ENCODE measurements at regions of chr9 and their contacts with region 1.

Region 1: GRCh38 chr9:18208154-18209059 is 265.5 kb upstream of the ADAMTSL1 start:
- DNase-seq: peak; percentile 8
- ATAC-seq: no peak
- H3K4me3 Mint-ChIP-seq: no peak overlapping the region
- H3K27ac Mint-ChIP-seq: no peak overlapping the region
- H3K4me1 Mint-ChIP-seq: no peaks in the 10 kb centered on the region
- H3K27me3 Mint-ChIP-seq: peaks cover 6% of the 10 kb centered on the region

Region 2: GRCh38 chr9:17810728-17811571 is 397.5 kb before region 1 on chr9:
- CTCF ChIA-PET with region 1: interaction called, 21 read pairs
- POLR2A ChIA-PET with region 1: no interaction called
- intact Hi-C with region 1: loop called (anchors 1 kb)
- DNase-seq: peak; percentile 63
- ATAC-seq: no peak
- H3K4me3 Mint-ChIP-seq: no peak overlapping the region
- H3K27ac Mint-ChIP-seq: no peak overlapping the region
- H3K4me1 Mint-ChIP-seq: no peaks in the 10 kb centered on the region
- H3K27me3 Mint-ChIP-seq: no peaks in the 10 kb centered on the region

Region 3: GRCh38 chr9:17900606-17901005 is 307.8 kb before region 1 on chr9:
- CTCF ChIA-PET with region 1: no interaction called
- POLR2A ChIA-PET with region 1: no interaction called
- intact Hi-C with region 1: no loop called
- DNase-seq: no peak
- ATAC-seq: no peak
- H3K4me3 Mint-ChIP-seq: no peak overlapping the region
- H3K27ac Mint-ChIP-seq: no peak overlapping the region
- H3K4me1 Mint-ChIP-seq: no peaks in the 10 kb centered on the region
- H3K27me3 Mint-ChIP-seq: peaks cover 8% of the 10 kb centered on the region

Region 4: DNA sequence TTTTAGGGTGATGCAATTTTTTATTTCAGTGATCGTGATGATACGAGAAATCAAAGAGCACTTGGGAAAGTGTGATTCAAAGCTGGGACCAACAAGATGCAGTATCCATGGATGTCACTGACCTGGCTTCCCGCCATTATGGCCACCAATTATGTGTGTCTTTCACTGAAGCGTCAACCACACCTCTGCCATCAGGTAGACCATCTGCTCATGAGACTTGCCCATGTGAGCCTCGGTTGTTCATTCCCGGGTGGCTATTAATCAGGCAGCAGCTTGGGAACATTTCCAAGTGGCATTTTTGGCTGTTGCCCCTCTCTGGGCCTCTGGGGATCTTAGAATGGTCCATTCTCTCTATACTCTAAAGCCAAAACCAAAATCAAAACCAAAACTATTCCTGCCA is 170.4 kb before region 1 on chr9:
- CTCF ChIA-PET with region 1: no interaction called
- POLR2A ChIA-PET with region 1: no interaction called
- intact Hi-C with region 1: no loop called
- DNase-seq: no peak
- ATAC-seq: no peak
- H3K4me3 Mint-ChIP-seq: no peak overlapping the region
- H3K27ac Mint-ChIP-seq: no peak overlapping the region
- H3K4me1 Mint-ChIP-seq: no peaks in the 10 kb centered on the region
- H3K27me3 Mint-ChIP-seq: no peaks in the 10 kb centered on the region

Measured in activated CD4-positive, alpha-beta T cell treated with anti-CD3 and anti-CD28 coated beads for 36 hours (primary cell).